ENCODE measurements at regions of chrX and their contacts with region 1.

Region 1: DNA sequence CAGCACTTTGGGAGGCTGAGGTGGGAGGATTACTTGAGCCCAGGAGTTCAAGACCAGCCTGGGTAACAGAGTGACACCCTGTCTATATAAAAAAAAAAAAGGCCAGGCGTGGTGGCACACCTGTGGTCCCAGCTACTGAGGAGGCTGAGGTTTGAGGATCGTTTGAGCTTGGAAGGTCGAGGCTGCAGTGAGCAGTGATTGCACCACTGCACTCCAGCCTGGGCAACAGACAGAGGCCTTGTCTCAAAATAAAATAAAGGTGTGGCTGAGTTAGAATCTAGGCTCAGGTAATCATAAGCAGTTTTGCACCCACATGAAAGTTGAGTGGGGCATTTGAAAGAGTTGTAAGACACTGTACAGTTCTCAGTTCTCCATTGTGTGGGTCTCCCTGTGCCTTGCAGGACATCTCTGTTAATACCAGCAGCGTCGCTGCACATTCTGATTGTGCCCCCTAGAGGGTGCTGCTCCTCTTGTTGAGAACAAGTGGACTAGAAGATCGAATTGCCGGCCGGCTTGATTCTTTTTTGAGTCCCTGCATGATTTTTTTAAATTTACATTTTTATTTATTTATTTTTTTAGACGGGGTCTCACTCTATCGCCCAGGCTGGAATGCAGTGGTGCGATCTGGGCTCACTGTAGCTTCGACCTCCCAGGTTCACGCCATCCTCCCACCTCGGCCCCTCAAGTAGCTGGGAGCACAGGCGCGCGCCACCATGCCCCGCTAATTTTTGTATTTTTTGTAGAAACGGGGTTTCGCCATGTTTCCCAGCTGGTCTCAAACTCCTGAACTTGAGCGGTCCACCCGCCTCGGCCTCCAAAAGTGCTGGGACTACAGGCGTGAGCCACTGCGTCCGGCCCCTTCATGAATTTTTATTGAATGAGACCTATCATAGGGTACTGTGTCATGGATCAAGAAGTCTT is 73.6 kb upstream of the RBMX start:
- ATAC-seq: peak in 4 of 8 experiments; percentile 48 to 88 (median 65)
- H3K4me3 ChIP-seq: no peak overlapping the region
- H3K27ac ChIP-seq: no peak overlapping the region
- H3K4me1 ChIP-seq: no peaks in the 10 kb centered on the region

Region 2: DNA sequence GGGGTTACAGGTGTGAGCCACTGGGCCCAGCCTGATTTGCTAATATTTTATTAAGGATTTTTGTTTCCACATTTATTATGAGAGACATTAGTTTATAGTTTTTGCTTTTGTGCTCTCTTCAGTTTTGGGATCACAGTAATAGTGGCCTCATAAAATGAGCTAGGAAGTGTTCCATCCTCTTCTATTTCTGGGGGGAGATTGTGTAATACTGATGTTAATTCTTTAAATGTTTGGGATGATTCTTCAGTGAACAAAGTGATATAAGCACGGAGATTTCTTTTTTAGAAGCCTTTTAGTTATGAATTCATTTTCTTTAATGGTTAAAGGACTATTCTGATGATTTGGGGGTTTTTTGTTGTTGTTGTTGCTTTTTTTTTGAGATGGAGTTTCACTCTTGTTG is 114.9 kb before region 1 on chrX:
- in situ Hi-C with region 1: no loop called
- ATAC-seq: no peak
- H3K4me3 ChIP-seq: no peak overlapping the region
- H3K27ac ChIP-seq: no peak overlapping the region
- H3K4me1 ChIP-seq: no peaks in the 10 kb centered on the region

Region 3: DNA sequence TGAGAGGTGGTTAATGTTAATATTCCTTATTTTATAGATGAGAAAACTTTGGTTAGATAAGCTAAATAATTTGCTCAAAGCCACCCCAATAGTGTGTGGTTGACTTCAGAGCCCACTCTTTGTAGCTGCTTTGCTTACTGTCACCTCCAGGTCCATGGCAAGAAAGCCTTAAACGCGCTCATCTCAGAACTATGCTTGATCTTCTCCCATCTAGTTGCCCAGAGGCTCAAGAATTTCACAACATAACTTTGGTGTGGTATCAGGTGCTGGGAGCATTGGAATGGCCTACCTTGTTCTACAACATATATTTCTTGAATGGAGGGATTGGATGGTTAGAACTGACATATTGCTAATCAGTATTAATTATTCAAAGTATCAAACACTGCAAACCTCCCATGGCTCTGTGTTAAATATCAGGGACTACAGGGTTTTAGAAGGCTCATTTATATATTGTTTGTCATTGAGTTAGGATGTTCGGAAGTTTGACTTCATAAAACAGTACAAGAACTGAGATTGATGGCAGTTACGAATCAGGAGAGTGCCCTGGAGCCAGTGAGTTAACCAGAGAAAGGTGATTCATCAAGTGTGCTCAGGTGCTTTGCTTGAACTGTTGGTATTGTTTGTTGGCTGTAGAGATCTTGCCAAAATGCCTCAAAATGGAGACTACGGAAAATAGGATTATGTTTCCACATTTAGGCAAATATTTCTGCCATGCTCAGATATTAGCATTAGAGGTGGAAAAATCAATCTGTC is 87.0 kb after region 1 on chrX:
- in situ Hi-C with region 1: no loop called
- ATAC-seq: no peak
- H3K4me3 ChIP-seq: no peak overlapping the region
- H3K27ac ChIP-seq: no peak overlapping the region
- H3K4me1 ChIP-seq: no peaks in the 10 kb centered on the region

Region 4: GRCh38 chrX:137051978-137052642 is 98.0 kb after region 1 on chrX:
- in situ Hi-C with region 1: loop called in 2 of 9 experiments (anchors 25 kb)
- ATAC-seq: peak; percentile 88 to 99 (median 98)
- H3K4me3 ChIP-seq: peak overlapping the region; percentile 36 to 49 (median 42)
- H3K27ac ChIP-seq: no peak overlapping the region
- H3K4me1 ChIP-seq: no peaks in the 10 kb centered on the region

Region 5: DNA sequence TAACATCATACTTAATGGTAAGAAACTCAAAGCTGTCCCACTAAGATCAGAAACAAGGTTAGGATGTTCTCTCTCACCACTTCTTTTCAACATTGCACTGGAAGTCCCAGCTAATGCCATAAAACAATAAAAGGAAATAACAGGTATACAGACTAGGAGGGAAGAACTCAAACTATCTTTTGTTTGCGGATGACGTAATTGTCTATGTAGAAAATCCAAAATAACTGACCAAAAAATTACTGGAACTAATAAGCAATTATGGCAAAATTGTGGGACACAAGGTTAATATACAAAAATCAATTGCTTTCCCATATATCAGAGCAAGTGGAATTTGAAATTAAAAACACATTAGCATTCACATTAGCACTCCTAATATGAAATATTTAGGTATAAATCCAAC is 183.4 kb after region 1 on chrX:
- in situ Hi-C with region 1: no loop called
- ATAC-seq: no peak
- H3K4me3 ChIP-seq: no peak overlapping the region
- H3K27ac ChIP-seq: no peak overlapping the region
- H3K4me1 ChIP-seq: no peaks in the 10 kb centered on the region

Region 6: DNA sequence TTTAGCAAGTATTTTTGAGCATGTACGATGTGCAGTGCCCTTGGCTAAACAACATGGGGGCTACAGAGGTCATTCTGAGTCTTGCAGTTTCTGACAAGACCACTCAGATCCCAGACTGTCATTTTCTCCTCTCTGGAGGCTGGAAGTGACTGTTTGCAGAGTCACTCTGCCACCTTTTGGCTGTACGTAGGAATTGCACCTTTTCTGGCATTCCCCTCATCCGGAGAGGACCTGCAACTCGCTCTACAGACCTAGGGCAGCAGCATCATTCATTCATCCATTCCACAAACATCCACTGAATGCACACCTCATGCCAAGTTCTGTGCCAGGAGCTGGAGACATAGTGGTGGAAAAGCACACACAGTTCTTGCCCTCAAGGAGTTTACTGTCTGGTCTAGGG is 240.0 kb after region 1 on chrX:
- in situ Hi-C with region 1: loop called in 2 of 9 experiments (anchors 25 kb)
- ATAC-seq: peak in 4 of 8 experiments; percentile 28 to 54 (median 44)
- H3K4me3 ChIP-seq: no peak overlapping the region
- H3K27ac ChIP-seq: no peak overlapping the region
- H3K4me1 ChIP-seq: no peaks in the 10 kb centered on the region